ENCODE measurements at regions of chr11 and their contacts with region 1.

Region 1: DNA sequence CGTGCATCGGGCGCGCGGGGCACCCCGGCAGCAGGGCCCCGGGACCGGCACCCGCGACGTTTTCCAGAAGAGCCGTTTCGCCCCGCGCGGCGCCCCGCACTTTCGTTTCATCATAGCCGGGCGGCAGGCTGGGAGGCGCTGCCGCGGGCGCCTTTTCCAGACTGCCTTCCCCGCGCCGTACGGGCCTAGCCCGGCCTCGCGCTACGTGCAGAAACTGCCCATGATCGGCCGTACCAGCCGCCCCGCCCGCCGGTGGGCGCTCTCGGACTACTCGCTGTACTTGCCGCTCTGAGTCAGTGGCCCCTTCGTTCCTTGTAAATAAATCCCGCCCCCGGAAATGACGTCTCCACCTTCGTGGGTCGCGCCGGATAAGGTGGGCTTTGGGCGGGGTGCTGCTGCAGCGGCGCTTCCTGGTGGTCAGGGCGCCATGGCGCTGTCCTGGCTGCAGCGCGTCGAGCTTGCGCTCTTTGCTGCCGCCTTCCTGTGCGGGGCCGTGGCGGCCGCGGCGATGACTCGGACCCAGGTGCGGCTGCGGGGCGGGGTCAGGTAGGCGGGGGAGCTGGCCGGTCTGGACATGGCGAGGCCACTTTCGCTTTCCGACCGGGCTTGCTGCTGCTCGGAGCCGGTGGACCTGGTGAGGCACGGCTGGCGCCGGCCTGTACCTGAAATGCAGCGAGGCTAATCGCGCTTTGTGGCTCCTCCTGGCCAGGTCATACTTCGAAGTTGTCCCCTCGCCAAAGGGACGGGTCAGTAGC is at the start of gene TMEM179B:
- DNase-seq: peak; percentile 96
- CTCF ChIP-seq: peak; percentile 65

Region 2: GRCh38 chr11:62726915-62727763 is 60.0 kb before region 1 on chr11 and contains the start of gene HNRNPUL2:
- CTCF ChIA-PET with region 1: interaction called, 24 read pairs
- POLR2A ChIA-PET with region 1: no interaction called
- DNase-seq: peak; percentile 98
- CTCF ChIP-seq: no peak

Region 3: GRCh38 chr11:62771144-62772021 is 15.8 kb before region 1 on chr11 and contains the start of gene TAF6L:
- CTCF ChIA-PET with region 1: interaction called, 159 read pairs
- POLR2A ChIA-PET with region 1: interaction called, 18 read pairs
- DNase-seq: peak; percentile 93
- CTCF ChIP-seq: no peak

Region 4: GRCh38 chr11:62805076-62805892 is 18.1 kb after region 1 on chr11 and contains the start of gene NXF1:
- CTCF ChIA-PET with region 1: interaction called, 24 read pairs
- POLR2A ChIA-PET with region 1: interaction called, 28 read pairs
- DNase-seq: peak; percentile 100
- CTCF ChIP-seq: no peak

Region 5: DNA sequence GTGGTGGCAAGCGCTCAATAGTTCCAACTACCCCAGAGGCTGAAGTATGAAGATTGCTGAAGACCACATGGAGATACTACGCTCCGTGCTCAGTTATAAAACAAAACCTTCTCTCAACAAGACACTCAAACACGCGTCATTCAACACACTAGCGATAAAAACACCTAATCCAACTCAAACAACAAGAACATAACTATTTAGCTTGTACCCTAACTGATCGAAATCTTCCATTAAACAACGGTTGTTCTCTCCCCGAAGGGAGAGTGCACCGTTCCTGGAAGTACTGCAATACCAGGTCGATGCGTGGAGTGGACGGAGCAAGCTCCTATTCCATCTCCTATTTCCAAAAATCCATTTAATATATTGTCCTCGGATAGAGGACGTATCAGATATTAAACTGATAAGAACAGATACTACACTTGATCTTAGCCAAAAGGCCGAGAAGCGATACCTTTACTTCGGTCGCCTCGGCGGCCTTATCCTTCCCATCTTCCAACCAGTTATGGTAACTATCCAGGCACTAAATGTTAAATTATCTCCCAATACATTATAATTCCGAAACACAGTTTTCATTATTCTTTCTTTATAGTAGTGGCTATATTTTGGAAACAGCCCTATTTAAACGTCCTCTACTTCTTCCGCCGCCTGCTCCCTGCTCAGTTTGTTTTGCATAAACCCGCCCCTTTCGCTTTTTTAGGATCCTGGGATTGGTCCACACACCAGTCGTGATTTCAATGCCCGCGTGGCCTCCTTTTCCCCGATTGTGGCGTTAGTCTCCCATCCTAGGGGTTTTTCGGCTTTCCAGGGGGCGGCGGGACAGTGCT is 54.4 kb after region 1 on chr11:
- CTCF ChIA-PET with region 1: interaction called, 17 read pairs
- POLR2A ChIA-PET with region 1: interaction called, 20 read pairs
- DNase-seq: peak; percentile 92
- CTCF ChIP-seq: no peak

Region 6: GRCh38 chr11:62860835-62861563 is 73.8 kb after region 1 on chr11:
- CTCF ChIA-PET with region 1: interaction called, 62 read pairs
- POLR2A ChIA-PET with region 1: interaction called, 25 read pairs
- DNase-seq: no peak
- CTCF ChIP-seq: no peak

Region 7: GRCh38 chr11:63099555-63099954 is 312.4 kb after region 1 on chr11:
- CTCF ChIA-PET with region 1: no interaction called
- POLR2A ChIA-PET with region 1: no interaction called
- DNase-seq: no peak
- CTCF ChIP-seq: no peak

Measured in GM10248 (cell line).